RWPE1 (cell line): ENCODE measurements at regions of chr1 and their contacts with region 1.

Region 1: DNA sequence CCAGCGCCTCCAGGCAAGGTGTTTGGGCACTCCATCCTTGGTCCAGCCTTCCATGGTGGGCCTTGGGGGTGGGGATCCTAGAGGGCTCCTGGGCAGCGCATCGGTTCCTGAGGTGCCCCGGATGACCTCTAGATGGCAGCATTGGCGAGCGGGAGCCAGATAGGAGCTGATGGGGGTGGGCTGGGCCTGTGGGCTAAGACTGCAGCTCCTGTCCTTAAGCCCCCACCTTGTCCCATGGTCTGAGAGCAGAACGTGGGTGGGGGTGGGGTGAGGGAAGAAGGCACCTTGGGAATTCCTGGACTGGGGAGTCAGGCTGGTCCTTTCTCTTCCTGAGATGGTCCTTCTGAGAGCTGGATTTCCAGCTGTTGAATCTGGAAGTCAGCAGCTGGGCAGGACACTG is 93.4 kb upstream of the CSF3R start:
- DNase-seq: peak; percentile 88
- H3K27ac ChIP-seq: no peak overlapping the region
- CTCF ChIP-seq: peak; percentile 86

Region 2: DNA sequence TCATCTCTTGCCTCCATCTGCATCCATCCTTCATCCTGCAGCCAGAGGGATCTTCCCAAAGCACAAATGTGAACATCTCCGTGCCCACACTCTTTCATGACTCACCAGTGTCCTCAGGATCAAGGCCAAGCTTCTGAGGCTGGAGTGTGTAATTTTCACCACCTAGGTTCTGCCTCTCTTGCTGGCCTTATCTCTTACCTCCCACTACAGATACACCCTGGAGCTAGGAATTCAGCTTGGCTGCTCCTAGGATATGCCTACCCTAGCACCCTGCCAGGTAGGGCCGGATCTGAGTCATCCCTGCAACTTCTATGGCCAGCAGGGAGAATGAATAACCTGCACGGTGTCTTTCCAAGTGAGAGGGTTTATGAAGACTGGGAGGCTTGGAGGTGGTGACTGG is 115.3 kb after region 1 on chr1:
- CTCF ChIA-PET with region 1: no interaction called
- POLR2A ChIA-PET with region 1: no interaction called
- DNase-seq: peak; percentile 69
- H3K27ac ChIP-seq: no peak overlapping the region
- CTCF ChIP-seq: no peak

Region 3: GRCh38 chr1:37038227-37039076 is 462.3 kb after region 1 on chr1:
- CTCF ChIA-PET with region 1: interaction called, 10 read pairs
- POLR2A ChIA-PET with region 1: no interaction called
- DNase-seq: peak; percentile 27
- H3K27ac ChIP-seq: no peak overlapping the region
- CTCF ChIP-seq: no peak

Region 4: GRCh38 chr1:37434292-37434907 is 858.3 kb after region 1 on chr1:
- CTCF ChIA-PET with region 1: interaction called, 18 read pairs
- POLR2A ChIA-PET with region 1: no interaction called
- DNase-seq: peak; percentile 78
- H3K27ac ChIP-seq: no peak overlapping the region
- CTCF ChIP-seq: peak; percentile 89

Region 5: GRCh38 chr1:37595440-37596319 is 1019.6 kb after region 1 on chr1 and contains the start of gene GNL2:
- CTCF ChIA-PET with region 1: no interaction called
- POLR2A ChIA-PET with region 1: no interaction called
- DNase-seq: peak; percentile 97
- H3K27ac ChIP-seq: peak within 1 kb of the TSS; percentile 65
- CTCF ChIP-seq: no peak